ENCODE measurements at regions of chr9 and their contacts with region 1.

Region 1: DNA sequence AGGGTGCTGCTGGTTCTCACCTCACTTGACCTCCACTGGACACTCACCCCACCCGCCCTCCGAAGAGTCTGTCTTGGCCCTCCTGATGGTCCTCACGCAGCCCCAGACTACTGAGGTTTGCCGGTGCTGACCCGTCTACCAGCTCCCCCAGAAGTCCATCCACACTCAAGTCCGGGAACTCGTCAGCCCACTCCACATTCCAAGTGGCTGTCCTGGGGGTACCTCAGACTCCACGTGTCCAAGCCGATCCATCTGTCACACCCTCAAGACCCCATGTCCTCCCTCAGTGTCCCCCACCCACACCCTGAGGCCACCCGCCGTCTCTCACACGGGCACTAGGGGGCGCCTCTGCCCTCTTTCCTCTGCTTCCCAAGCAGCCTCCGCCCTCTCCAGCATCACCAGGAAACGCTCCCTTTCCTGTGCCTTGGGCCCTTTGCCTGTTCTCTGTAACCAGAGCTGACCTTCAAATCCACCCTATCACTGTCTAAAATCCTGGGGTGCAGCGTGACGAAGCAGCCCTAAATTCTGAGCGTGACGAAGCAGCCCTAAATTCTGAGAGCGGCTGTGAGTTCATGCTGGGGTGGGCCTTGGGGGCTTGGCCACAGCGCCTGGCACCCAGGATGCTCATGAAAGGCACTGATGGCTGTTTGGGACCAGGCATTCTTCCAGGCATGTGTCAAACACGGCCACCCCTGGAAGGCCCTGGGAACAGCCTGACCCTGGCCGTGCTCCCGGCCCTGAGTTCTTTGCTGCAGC is 95.7 kb downstream of the KCNT1 start:
- DNase-seq: peak; percentile 62 to 68
- ATAC-seq: peak; percentile 74 to 95 (median 84)
- H3K4me3 ChIP-seq: no peak overlapping the region
- H3K27ac ChIP-seq: peak overlapping the region in 5 of 10 donors; percentile 6 to 36 (median 29)
- H3K4me1 ChIP-seq: peaks cover 6 to 19% (median 11%) of the 10 kb centered on the region in 9 donors
- H3K27me3 ChIP-seq: peaks cover 0 to 5% (median 0%) of the 10 kb centered on the region in 7 donors
- CTCF ChIP-seq: peak; percentile 31 to 77 (median 73)

Region 2: DNA sequence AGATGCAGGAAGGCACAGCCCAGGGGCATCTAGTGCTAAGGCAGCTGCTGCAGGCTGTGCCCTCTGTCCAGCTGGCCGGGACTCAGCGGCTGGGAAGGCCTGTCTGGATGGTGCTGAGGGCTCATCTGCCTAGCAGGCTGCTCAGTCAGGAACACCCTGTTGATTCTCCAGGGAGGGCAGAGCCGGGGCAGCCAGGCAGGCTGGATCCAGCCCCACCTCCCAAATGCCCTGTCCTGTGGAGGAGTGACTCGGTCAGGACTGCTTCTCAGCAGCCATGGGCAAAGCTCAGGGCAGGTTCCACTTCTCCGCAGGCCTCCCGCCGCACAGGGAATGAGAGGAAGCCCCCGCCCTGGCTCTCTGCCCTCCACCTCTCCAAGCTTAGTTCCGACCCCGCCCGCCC is 142.3 kb before region 1 on chr9:
- intact Hi-C with region 1: no loop called
- DNase-seq: no peak
- ATAC-seq: no peak
- H3K4me3 ChIP-seq: no peak overlapping the region
- H3K27ac ChIP-seq: no peak overlapping the region
- H3K4me1 ChIP-seq: no peaks in the 10 kb centered on the region
- H3K27me3 ChIP-seq: peaks cover 0 to 32% (median 9%) of the 10 kb centered on the region in 7 donors
- CTCF ChIP-seq: no peak

Region 3: DNA sequence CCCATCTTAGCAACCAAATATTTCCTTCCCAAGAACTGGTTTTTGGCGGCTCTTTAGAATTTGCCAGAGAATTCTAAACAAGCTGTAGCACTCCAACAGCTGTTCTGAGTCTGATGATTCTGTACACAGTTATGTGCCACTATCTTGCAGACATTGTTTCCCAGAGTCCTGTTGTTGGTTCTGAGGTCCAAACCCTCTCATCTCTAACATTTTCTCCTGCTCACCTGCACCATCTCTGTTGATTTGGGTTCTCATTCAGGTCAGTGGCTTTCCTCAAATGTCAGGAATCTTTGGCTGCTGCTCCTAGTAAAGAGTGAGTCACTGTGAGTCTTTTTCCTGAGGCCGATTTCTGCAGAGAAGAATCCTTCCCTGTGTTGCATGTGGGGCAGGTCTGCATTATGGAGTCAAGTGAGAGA is 59.7 kb after region 1 on chr9:
- intact Hi-C with region 1: loop called in 1 of 10 experiments (anchors 10 kb)
- DNase-seq: no peak
- ATAC-seq: no peak
- H3K4me3 ChIP-seq: no peak overlapping the region
- H3K27ac ChIP-seq: no peak overlapping the region
- H3K4me1 ChIP-seq: no peaks in the 10 kb centered on the region
- H3K27me3 ChIP-seq: no peaks in the 10 kb centered on the region
- CTCF ChIP-seq: no peak